WTC11 (cell line): ENCODE measurements at regions of chr1 and their contacts with region 1.

Region 1: GRCh38 chr1:182143154-182143657 is 81.7 kb upstream of the ZNF648 start:
- DNase-seq: peak; percentile 95
- ATAC-seq: peak; percentile 82
- H3K4me3 Mint-ChIP-seq: no peak overlapping the region
- H3K27ac Mint-ChIP-seq: no peak overlapping the region
- H3K4me1 Mint-ChIP-seq: peaks cover 19% of the 10 kb centered on the region
- H3K27me3 Mint-ChIP-seq: no peaks in the 10 kb centered on the region
- CTCF ChIP-seq: peak; percentile 95

Region 2: GRCh38 chr1:182113879-182114626 is 29.2 kb before region 1 on chr1:
- CTCF ChIA-PET with region 1: interaction called, 15 read pairs
- POLR2A ChIA-PET with region 1: no interaction called
- DNase-seq: no peak
- ATAC-seq: peak; percentile 27
- H3K4me3 Mint-ChIP-seq: no peak overlapping the region
- H3K27ac Mint-ChIP-seq: no peak overlapping the region; the same call in 1 of the 2 replicates
- H3K4me1 Mint-ChIP-seq: peaks cover 15% of the 10 kb centered on the region
- H3K27me3 Mint-ChIP-seq: peaks cover 3% of the 10 kb centered on the region; the same call in 1 of the 2 replicates
- CTCF ChIP-seq: no peak

Region 3: DNA sequence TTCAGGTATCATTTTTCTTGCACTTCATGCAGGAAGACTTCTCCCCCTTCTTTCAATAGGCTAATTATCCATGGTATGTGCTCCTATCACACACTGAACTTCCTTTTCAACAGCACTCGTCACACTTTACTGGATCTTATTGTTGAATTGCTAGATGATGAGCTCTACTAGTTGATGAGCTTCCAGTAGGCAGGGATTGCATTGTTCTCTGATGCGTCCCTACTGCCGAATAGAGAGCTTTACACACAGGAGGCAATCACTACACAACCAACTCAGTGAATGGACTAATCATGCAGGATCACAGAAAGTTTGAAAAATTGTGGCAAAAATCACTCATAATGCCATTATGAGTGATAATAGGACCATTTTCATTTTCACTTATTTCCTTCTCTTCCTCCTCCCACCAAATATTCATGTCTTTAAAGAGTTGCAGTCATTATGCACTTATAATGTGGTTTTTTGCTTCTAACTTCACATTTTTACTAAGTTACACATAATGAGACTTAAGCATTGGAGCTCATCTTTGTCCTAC is 46.4 kb after region 1 on chr1:
- CTCF ChIA-PET with region 1: interaction called, 10 read pairs
- POLR2A ChIA-PET with region 1: no interaction called
- DNase-seq: no peak
- ATAC-seq: no peak
- H3K4me3 Mint-ChIP-seq: no peak overlapping the region
- H3K27ac Mint-ChIP-seq: no peak overlapping the region
- H3K4me1 Mint-ChIP-seq: no peaks in the 10 kb centered on the region
- H3K27me3 Mint-ChIP-seq: no peaks in the 10 kb centered on the region; the same call in 1 of the 2 replicates
- CTCF ChIP-seq: no peak

Region 4: DNA sequence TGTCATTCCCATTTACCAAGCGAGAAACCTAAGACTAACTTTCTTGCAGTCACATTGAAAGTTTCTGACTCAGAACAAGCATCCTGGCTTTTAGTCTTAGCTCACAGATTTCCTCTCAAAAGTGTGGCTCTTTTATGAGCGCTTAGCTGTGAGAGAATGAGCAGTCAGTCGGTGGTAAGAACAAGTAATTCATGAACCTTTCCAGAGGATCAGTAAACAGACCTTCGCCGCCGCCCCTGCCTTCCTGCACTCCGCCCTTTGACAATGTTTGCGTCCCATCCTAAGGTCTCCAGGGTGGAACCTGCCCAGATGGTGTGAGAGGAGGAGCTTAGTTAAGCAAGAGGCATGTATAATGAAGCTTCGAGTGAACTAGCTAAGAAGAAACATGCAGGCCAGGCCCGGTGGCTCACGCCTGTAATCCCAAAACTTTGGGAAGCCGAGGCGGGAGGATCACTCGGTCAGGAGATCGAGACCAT is 106.0 kb after region 1 on chr1:
- CTCF ChIA-PET with region 1: interaction called, 10 read pairs
- POLR2A ChIA-PET with region 1: no interaction called
- DNase-seq: no peak
- ATAC-seq: peak; percentile 87
- H3K4me3 Mint-ChIP-seq: no peak overlapping the region
- H3K27ac Mint-ChIP-seq: no peak overlapping the region
- H3K4me1 Mint-ChIP-seq: 0 out of 2 replicates have a peak, but pooled peaks cover 3% of the 10 kb centered on the region
- H3K27me3 Mint-ChIP-seq: no peaks in the 10 kb centered on the region
- CTCF ChIP-seq: no peak

Region 5: DNA sequence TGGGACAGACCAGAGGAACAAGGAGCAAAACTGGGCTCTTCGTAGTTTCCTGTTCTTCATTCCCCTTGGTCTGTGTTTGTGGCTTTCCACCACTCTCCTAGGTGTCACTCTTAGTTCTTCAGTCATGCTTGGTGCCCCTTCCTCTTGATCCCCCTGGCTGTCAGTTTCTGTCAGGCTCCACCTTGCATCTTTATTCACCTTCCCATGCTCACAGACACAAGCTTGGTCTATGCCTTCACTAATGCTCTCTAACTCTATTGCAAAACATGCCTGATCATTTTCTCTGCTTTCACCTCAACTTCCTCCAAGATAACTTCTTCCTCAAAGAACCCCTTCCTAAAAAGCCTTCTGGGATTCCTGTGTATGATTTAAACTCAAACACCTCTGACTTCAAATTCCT is 125.5 kb after region 1 on chr1:
- CTCF ChIA-PET with region 1: no interaction called
- POLR2A ChIA-PET with region 1: no interaction called
- DNase-seq: no peak
- ATAC-seq: no peak
- H3K4me3 Mint-ChIP-seq: no peak overlapping the region
- H3K27ac Mint-ChIP-seq: no peak overlapping the region
- H3K4me1 Mint-ChIP-seq: no peaks in the 10 kb centered on the region
- H3K27me3 Mint-ChIP-seq: no peaks in the 10 kb centered on the region
- CTCF ChIP-seq: no peak

Region 6: DNA sequence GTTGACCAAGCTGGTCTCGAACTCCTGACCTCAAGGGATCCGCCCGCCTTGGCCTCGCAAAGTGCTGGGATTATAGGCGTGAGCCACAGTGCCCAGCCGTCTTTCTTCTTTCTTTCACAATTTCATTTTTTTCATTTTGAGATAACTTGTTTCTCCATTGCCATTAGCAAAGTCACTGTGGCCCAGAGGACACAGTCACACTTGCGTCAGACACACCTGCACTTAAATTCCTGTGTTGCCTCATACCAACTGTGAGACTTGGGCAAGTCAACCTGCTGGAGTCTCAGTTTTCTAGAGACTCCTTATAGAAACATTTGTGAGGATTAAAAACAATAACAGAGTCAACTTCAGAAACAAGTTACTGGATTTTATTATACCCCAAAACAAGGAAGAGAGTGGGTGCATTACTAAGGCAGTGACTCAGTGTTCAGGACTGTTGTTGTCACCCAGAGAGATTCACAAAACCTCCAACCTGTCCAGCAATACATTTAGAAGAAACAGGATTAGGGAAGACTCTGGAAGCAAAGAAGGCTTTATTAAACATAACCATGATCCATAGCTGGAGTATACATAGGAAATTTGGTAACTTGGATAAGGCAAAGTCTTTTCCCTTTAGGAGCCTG is 254.7 kb after region 1 on chr1:
- CTCF ChIA-PET with region 1: interaction called, 39 read pairs
- POLR2A ChIA-PET with region 1: interaction called, 6 read pairs
- DNase-seq: no peak
- ATAC-seq: no peak
- H3K4me3 Mint-ChIP-seq: no peak overlapping the region
- H3K27ac Mint-ChIP-seq: no peak overlapping the region
- H3K4me1 Mint-ChIP-seq: peaks cover 30% of the 10 kb centered on the region
- H3K27me3 Mint-ChIP-seq: no peaks in the 10 kb centered on the region
- CTCF ChIP-seq: no peak